PC-9 (cell line): ENCODE measurements at regions of chr13 and their contacts with region 1.

Region 1: DNA sequence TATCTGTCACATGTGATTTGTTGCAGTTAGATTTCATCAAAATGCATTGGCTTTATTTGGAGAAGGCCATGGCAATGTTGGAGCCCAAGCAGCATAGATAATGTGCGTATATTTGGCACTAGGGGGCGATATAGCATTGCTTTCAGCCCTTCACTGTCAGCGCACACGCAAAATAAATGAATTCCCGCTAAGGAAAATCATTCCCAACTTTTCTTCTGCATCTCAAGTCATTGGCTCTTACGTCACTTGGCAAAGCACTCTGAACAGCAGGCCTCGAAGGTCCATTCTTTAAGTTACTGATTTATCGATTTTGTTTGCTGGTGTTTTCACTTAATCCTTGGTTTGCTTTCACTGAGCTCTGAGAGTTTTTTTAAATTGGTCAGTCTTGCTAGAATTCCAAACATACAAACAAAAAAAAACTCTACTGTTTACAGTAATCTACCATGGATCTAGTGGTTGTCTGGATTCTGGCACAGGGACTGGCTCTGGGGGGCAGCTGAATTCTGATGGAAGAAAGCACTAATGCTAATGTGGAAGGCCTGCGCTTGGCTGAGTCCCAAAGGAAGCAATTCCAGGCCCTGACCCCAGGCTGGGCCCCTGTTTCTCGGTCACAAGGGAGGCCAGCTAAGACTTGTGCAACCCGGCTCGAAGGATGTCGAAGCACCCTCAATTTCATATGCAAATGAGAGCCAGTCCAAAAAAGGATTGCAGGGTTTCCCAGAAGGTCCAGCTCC is 97.7 kb upstream of the IPO5 start:
- DNase-seq: peak; percentile 27 to 54
- H3K4me3 ChIP-seq: no peak overlapping the region
- H3K27ac ChIP-seq: no peak overlapping the region
- H3K4me1 ChIP-seq: peaks cover 9% of the 10 kb centered on the region; the same call in 1 of the 2 replicates
- H3K27me3 ChIP-seq: no peaks in the 10 kb centered on the region
- CTCF ChIP-seq: peak; percentile 94

Region 2: DNA sequence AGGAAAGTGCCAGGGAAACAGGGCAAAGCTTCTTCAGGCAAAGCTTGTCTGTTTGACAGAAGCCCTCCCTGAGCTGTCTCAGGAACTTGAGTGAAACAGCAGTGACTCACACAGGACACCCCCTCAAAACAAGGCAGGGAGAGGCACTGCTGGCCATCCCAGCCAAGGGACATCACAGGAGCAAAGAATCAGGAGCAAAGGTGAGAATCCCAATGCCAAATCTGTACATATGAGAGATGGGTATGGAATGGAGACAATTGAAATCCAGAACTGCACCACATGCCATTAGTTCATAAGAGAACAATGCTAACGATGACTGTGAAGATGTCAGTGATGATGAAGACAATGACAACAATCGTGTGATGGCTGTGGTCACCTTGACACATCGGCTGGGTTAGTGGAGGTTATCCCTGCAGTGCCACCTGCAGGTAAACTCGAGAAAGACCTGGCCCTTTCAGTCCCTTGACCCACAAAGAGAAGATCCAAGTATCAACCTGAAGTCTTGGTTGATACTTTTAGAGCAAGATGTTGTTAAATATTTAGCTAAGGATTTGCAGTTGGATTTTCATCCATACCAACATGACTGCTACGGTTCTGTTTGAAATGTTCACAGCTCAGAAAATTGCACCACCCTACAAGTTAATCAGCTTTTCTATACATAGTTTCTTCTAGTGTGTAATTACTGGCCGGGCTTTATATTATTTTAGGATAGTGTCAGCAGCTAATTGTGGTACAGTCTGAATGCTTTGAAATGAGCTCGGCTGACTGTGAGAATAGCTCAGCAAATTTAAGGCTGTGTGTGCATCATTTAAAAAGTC is 55.8 kb after region 1 on chr13:
- CTCF ChIA-PET with region 1: no interaction called
- POLR2A ChIA-PET with region 1: no interaction called
- intact Hi-C with region 1: loop called (anchors 1 kb)
- DNase-seq: peak; percentile 5 to 41
- H3K4me3 ChIP-seq: no peak overlapping the region
- H3K27ac ChIP-seq: no peak overlapping the region
- H3K4me1 ChIP-seq: no peaks in the 10 kb centered on the region
- H3K27me3 ChIP-seq: no peaks in the 10 kb centered on the region
- CTCF ChIP-seq: peak; percentile 67

Region 3: DNA sequence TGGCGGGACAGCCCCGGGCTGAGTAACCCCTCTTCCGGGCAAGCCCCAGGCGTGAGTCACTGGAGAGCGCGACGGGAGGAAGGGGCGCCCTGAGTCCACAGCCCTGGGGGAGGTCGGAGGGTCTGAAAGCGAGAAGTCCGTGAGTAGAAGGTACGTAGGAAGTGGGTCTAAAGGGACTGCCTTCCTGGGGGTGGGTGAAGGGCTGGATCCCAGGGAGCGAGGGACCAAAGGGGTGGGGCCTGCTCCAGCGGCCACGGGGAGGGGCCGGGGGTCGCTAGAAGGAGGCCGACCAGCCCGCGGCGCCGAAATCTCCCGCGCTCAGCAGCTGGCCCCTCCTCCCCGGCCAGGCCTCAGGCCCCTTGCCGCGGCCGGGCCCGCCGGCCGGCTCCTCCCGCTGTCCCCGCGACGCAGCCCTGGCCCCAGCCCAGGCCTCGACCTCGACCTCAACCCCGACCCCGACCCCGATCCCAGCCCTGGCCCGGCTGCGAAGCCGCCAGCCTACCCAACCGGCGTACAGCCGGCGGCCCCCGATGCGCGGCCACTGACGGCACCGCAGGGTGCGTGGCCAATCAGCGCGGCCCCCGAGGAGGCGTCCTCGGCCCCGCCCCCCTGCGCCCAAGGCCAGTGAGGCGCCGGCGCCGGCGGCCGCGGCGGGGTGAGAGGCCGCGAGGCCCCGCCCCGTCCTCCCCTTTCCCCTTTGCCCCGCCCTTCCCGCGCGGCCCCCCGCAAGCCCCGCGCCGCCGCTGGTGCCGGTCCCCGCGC is 120.3 kb after region 1 on chr13:
- CTCF ChIA-PET with region 1: no interaction called
- POLR2A ChIA-PET with region 1: no interaction called
- intact Hi-C with region 1: loop called (anchors 1 kb)
- DNase-seq: peak; percentile 74 to 91
- H3K4me3 ChIP-seq: peak overlapping the region; percentile 92
- H3K27ac ChIP-seq: peak overlapping the region; percentile 61
- H3K4me1 ChIP-seq: peaks cover 21% of the 10 kb centered on the region
- H3K27me3 ChIP-seq: no peaks in the 10 kb centered on the region
- CTCF ChIP-seq: no peak

Region 4: GRCh38 chr13:97986835-97987234 is 131.1 kb after region 1 on chr13:
- CTCF ChIA-PET with region 1: no interaction called
- POLR2A ChIA-PET with region 1: no interaction called
- intact Hi-C with region 1: loop called (anchors 5 kb)
- DNase-seq: no peak
- H3K4me3 ChIP-seq: no peak overlapping the region
- H3K27ac ChIP-seq: no peak overlapping the region
- H3K4me1 ChIP-seq: no peaks in the 10 kb centered on the region
- H3K27me3 ChIP-seq: no peaks in the 10 kb centered on the region
- CTCF ChIP-seq: no peak

Region 5: GRCh38 chr13:98416345-98416845 is 560.7 kb after region 1 on chr13:
- CTCF ChIA-PET with region 1: no interaction called
- POLR2A ChIA-PET with region 1: no interaction called
- intact Hi-C with region 1: loop called (anchors 5 kb)
- DNase-seq: peak; percentile 68 to 100
- H3K4me3 ChIP-seq: peak overlapping the region; percentile 22; the same call in 1 of the 2 replicates
- H3K27ac ChIP-seq: peak overlapping the region; percentile 65
- H3K4me1 ChIP-seq: peaks cover 33% of the 10 kb centered on the region
- H3K27me3 ChIP-seq: no peaks in the 10 kb centered on the region
- CTCF ChIP-seq: no peak

Region 6: DNA sequence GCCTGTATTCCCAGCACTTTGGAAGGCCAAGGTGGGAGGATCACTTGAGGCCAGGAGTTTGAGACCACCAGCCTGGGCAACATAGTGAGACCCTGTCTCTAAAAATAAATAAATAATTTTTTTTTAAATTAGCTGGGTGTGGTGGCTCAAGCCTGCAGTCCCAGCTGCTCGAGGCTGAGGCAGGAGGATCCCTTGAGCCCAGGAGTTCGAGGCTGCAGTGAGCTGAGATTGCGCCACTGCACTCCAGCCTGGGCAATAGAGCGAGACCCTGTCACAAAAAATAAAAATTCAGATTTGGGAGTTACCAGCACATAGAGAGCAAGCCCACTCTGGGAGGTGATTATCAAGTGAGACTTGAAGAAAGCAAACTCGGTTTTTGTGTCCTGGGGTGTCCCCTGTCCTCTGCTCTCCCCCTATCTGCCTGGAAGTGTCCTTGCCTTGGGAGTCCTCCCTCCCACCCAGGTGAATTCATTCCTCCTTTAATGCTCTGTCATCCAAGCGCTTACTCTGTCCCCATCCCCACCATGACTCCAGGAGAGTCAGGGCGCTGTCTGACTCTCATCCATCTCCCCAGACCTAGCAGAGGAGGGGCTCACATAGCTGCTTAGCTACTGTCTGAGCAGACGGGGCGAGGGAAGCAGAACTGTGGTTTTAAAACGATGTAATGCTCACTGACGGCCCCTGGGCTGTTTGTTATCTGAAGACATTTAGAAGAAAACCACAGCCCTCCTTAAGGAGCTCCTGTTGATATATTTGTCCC is 574.4 kb after region 1 on chr13:
- CTCF ChIA-PET with region 1: no interaction called
- POLR2A ChIA-PET with region 1: no interaction called
- intact Hi-C with region 1: loop called (anchors 2 kb)
- DNase-seq: no peak
- H3K4me3 ChIP-seq: no peak overlapping the region
- H3K27ac ChIP-seq: no peak overlapping the region
- H3K4me1 ChIP-seq: peaks cover 10% of the 10 kb centered on the region
- H3K27me3 ChIP-seq: no peaks in the 10 kb centered on the region
- CTCF ChIP-seq: no peak

Region 7: DNA sequence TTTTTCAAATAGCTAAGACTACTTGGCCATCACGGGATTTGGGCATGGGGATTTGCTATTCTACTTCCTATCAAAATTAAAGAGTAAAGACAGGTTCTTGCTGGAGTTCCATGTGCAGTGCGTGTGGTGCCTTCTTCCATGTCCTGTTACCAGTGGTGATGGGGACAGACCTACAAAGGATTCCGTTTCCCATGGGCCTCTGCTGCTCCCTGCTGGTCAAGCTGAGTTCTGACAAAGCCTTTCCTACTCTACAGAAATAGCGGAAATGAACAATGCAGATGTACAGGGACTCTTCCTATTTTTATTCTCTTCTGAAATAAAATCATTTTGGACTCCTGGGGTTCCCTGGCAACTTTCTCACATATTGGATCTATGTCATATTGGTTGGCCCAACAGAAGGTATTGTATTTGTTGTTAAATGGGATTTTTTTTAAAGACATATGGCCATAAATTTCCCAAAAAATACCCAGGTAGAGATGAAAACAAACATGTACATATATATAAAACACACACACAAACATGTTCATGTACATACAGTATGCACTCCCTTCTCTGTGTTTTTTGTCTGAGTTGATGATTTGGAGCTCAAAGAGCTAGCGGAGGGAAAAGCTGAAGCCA is 987.2 kb after region 1 on chr13:
- CTCF ChIA-PET with region 1: no interaction called
- POLR2A ChIA-PET with region 1: no interaction called
- intact Hi-C with region 1: loop called (anchors 2 kb)
- DNase-seq: peak; percentile 59 to 62
- H3K4me3 ChIP-seq: no peak overlapping the region
- H3K27ac ChIP-seq: no peak overlapping the region
- H3K4me1 ChIP-seq: no peaks in the 10 kb centered on the region
- H3K27me3 ChIP-seq: no peaks in the 10 kb centered on the region
- CTCF ChIP-seq: peak; percentile 93